Activated CD4-positive, alpha-beta T cell treated with anti-CD3 and anti-CD28 coated beads, Interleukin-2, amount 10 ng/mL, durations not matched to agents 24 days and 14 days (primary cell): ENCODE measurements at regions of chr2 and their contacts with region 1.

Region 1: GRCh38 chr2:96527286-96528005 is 9.1 kb upstream of the ARID5A start:
- DNase-seq: peak; percentile 91
- H3K4me3 Mint-ChIP-seq: peak overlapping the region; percentile 81
- H3K27ac Mint-ChIP-seq: peak overlapping the region; percentile 94
- H3K4me1 Mint-ChIP-seq: peaks cover 86% of the 10 kb centered on the region
- H3K27me3 Mint-ChIP-seq: no peaks in the 10 kb centered on the region

Region 2: DNA sequence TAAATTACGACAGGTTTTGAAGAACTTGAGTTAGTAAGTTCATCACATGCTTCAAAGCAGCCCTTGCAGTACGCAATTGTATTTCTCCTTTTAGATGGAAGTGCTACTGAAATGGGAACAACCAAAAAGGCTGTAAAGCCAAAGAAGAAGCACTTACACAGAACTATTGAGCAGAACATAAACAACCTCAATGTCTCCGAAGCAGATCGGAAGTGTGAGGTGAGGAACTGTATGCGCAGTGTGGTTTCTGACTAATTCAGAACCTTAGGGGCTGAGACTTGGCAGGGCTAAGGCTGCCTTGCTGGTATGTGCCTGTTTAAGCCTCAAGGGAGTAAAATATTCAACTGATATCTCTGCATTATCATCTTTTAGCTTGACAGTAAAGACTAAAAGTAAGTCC is 183.4 kb before region 1 on chr2:
- intact Hi-C with region 1: loop called (anchors 5 kb)
- DNase-seq: peak; percentile 75
- H3K4me3 Mint-ChIP-seq: no peak overlapping the region
- H3K27ac Mint-ChIP-seq: peak overlapping the region; percentile 75
- H3K4me1 Mint-ChIP-seq: peaks cover 47% of the 10 kb centered on the region
- H3K27me3 Mint-ChIP-seq: no peaks in the 10 kb centered on the region

Region 3: GRCh38 chr2:96396095-96396494 is 131.4 kb before region 1 on chr2:
- intact Hi-C with region 1: no loop called
- DNase-seq: no peak
- H3K4me3 Mint-ChIP-seq: no peak overlapping the region
- H3K27ac Mint-ChIP-seq: no peak overlapping the region
- H3K4me1 Mint-ChIP-seq: no peaks in the 10 kb centered on the region
- H3K27me3 Mint-ChIP-seq: peaks cover 16% of the 10 kb centered on the region

Region 4: DNA sequence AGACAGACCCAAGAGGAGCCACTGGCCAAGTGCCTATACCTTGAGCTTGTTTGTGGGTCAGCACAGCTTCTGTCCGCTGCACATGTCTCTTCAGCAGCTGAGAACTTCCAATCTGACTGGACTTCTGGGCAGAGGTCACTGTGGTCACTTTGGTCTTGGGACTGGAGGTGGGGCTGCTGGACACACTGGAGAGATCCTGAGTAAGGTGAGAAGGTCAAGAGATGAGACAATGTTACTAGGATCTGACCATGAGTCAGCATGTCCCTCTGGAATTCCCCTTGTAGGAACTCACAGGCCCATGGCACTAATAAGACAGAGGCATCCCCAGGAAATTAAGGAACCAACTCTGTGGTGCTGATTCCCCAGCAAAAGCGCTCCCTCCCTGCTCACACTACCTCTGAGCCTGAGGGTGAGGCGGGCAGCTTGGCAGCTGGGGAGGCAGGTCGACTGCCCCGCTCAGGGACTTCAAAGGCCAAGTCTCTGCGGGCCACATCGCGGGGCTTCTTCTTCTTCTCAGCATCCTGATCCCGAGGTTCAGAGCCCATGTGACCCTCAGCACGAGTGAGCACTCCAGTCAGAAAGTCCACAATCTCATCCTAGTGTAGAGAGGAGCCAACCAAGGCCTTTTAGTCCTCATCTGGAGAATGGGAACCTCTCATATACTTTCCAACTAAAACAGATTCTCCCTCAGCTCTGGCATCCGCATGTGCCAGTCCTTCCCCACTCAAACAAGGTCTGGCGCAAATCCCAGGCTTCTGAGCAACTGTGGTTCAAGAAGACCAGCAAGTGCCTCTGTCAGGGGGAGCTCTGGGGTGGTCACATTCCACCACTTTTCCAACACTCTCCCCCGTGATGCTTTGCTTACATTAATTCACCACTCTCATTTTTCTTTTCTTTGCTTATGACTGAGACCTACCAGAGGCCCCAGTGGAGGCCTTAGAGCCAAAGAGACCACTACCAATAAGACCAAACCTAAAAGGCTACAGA is 81.3 kb after region 1 on chr2:
- intact Hi-C with region 1: no loop called
- DNase-seq: no peak
- H3K4me3 Mint-ChIP-seq: no peak overlapping the region
- H3K27ac Mint-ChIP-seq: peak overlapping the region; percentile 30
- H3K4me1 Mint-ChIP-seq: peaks cover 5% of the 10 kb centered on the region
- H3K27me3 Mint-ChIP-seq: no peaks in the 10 kb centered on the region